Activated naive CD4-positive, alpha-beta T cell treated with anti-CD3 and anti-CD28 coated beads for 36 hours (primary cell): ENCODE measurements at regions of chr2 and their contacts with region 1.

Region 1: GRCh38 chr2:237987268-237987667 is 20.5 kb downstream of the UBE2F start:
- DNase-seq: no peak
- H3K4me3 Mint-ChIP-seq: no peak overlapping the region
- H3K27ac Mint-ChIP-seq: no peak overlapping the region
- H3K4me1 Mint-ChIP-seq: peaks cover 20% of the 10 kb centered on the region
- H3K27me3 Mint-ChIP-seq: no peaks in the 10 kb centered on the region

Region 2: DNA sequence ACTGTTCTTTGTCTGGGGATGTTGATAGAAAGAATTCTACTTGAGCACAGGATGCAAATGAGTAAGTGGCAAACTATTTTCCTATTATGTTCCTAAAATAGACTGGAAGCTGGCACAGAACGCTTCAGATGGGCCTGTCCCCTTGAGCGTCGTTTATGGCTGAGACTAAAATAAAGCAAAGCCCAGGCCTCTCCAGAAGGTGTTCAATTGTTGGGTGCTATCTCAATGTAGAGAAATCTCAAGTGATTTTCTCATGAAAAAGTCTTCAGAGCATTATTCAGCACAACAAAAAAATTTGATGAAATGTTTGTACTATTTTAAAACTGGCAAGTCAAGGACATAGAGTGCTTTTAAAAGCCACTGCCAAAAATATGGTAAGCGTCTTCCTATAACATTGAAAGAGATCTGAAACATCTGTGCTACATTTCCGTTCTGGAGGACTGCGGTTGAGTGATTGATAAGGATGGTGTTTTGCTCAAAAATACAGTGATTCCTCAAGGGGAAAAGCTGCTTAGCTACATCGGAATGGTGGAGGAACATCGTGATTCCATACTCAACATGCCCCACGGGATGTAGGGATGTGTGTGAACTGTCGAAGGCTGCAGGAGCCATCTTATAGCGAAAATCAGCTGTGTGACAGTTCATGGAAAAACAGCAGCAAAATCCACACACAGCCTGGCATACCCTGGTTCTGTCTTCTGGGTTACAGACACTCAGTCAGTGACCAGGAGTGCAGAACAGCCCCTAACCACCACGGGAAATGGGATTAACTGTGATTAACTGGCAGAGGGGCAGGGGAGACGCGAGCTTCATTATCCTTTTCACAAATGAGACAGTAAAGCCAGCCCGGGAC is 370.3 kb before region 1 on chr2:
- CTCF ChIA-PET with region 1: no interaction called
- intact Hi-C with region 1: no loop called
- DNase-seq: no peak
- H3K4me3 Mint-ChIP-seq: no peak overlapping the region
- H3K27ac Mint-ChIP-seq: no peak overlapping the region
- H3K4me1 Mint-ChIP-seq: peaks cover 30% of the 10 kb centered on the region
- H3K27me3 Mint-ChIP-seq: no peaks in the 10 kb centered on the region

Region 3: GRCh38 chr2:237915576-237915975 is 71.7 kb before region 1 on chr2:
- CTCF ChIA-PET with region 1: no interaction called
- intact Hi-C with region 1: no loop called
- DNase-seq: no peak
- H3K4me3 Mint-ChIP-seq: no peak overlapping the region
- H3K27ac Mint-ChIP-seq: no peak overlapping the region
- H3K4me1 Mint-ChIP-seq: no peaks in the 10 kb centered on the region
- H3K27me3 Mint-ChIP-seq: no peaks in the 10 kb centered on the region

Region 4: GRCh38 chr2:238009563-238009962 is 22.3 kb after region 1 on chr2:
- CTCF ChIA-PET with region 1: no interaction called
- intact Hi-C with region 1: no loop called
- DNase-seq: no peak
- H3K4me3 Mint-ChIP-seq: peak overlapping the region; percentile 33
- H3K27ac Mint-ChIP-seq: no peak overlapping the region
- H3K4me1 Mint-ChIP-seq: peaks cover 44% of the 10 kb centered on the region
- H3K27me3 Mint-ChIP-seq: no peaks in the 10 kb centered on the region

Region 5: GRCh38 chr2:238023608-238024007 is 36.3 kb after region 1 on chr2:
- CTCF ChIA-PET with region 1: no interaction called
- intact Hi-C with region 1: loop called (anchors 1 kb)
- DNase-seq: no peak
- H3K4me3 Mint-ChIP-seq: no peak overlapping the region
- H3K27ac Mint-ChIP-seq: no peak overlapping the region
- H3K4me1 Mint-ChIP-seq: peaks cover 12% of the 10 kb centered on the region
- H3K27me3 Mint-ChIP-seq: no peaks in the 10 kb centered on the region

Region 6: GRCh38 chr2:238305092-238305862 is 318.0 kb after region 1 on chr2:
- CTCF ChIA-PET with region 1: no interaction called
- intact Hi-C with region 1: no loop called
- DNase-seq: no peak
- H3K4me3 Mint-ChIP-seq: no peak overlapping the region
- H3K27ac Mint-ChIP-seq: no peak overlapping the region
- H3K4me1 Mint-ChIP-seq: no peaks in the 10 kb centered on the region
- H3K27me3 Mint-ChIP-seq: peaks cover 3% of the 10 kb centered on the region